ENCODE measurements at regions of chr11 and their contacts with region 1.

Region 1: GRCh38 chr11:122101625-122102291 is 14.3 kb downstream of the BLID start:
- DNase-seq: peak in 1 of 2 donors; percentile 86
- H3K4me3 ChIP-seq: peak overlapping the region; percentile 71 to 77
- H3K27ac ChIP-seq: peak overlapping the region; percentile 91
- H3K4me1 ChIP-seq: peaks cover 3 to 25% of the 10 kb centered on the region in 2 donors
- H3K27me3 ChIP-seq: no peaks in the 10 kb centered on the region
- CTCF ChIP-seq: peak; percentile 60 to 80 (median 72)

Region 2: DNA sequence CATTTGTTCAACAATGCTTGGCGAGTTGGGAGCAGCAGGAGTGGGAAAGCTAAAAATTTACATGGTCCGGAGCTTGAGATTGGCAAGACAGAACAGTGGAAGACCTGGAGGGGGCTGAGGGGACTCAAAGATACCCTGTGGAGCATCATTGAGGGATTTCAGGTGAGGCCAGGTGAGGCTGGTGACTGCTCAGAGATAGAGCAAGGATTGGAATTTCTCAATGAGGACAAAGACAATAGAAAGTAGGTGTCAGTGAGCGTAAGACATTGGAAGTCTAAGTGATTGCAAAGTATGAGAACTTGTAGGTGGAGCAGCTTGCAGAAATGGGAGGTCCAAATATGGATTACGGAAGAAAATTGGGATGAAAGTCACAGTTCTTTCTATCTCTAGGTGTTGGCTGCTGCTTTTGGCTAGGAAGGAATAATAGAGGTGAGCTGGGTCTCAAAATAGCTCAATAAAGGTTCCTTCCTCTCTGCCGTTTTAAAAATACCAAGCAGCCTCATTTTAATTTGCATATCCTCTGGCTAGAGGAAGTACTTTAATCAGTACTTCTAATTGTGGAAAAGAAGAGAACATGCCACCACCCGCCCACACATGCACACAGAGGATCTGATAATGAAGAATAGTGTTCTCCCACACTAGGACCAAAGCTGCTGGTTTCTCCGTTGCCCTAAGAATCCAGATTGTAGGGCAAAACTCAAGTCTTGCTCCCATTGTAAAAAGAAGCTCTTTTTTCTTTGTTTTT is 607.2 kb before region 1 on chr11:
- intact Hi-C with region 1: no loop called
- DNase-seq: no peak
- H3K4me3 ChIP-seq: no peak overlapping the region
- H3K27ac ChIP-seq: no peak overlapping the region
- H3K4me1 ChIP-seq: no peaks in the 10 kb centered on the region
- H3K27me3 ChIP-seq: no peaks in the 10 kb centered on the region
- CTCF ChIP-seq: no peak

Region 3: DNA sequence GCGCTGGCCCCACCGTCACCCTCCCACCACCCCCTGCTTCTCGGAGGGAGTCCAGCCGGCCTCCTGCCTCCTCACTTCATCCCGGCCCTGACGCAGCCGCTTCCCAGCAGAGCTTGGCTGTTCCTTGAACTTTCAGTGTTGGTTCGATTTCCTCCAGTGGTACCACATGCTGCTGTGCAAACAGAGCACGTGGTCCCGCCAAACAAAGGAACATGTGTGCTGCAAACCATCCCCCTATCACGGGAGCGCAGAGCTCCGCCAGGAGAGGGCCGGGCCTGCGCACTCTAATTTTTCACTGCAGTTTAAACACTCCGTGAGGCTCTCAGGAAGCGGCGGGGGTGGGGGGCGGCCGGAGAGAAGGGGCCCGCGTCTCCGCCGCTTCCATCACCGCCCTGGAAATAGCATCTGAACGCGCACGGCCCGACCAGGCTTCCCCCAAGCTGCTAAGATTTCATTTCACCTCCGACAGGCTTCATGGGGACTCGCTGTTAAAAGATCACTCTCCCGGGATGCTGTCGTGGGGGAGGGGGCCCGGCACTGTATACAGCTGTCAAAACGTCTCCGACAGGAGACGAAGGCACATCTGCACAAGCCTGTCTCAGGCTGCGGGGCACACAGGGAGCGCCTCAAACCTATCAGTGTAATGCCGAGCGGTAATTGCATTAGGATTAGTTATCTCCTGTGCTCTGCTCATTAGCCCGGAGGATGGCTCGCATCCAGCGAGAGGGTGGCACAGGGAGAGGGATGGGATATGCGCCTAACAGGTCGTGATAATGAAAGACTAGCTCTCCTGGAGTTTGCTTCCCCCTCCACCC is 379.1 kb before region 1 on chr11:
- intact Hi-C with region 1: loop called (anchors 5 kb)
- DNase-seq: peak; percentile 77 to 89
- H3K4me3 ChIP-seq: peak overlapping the region; percentile 64 to 79
- H3K27ac ChIP-seq: peak overlapping the region; percentile 85 to 93
- H3K4me1 ChIP-seq: no peaks in the 10 kb centered on the region
- H3K27me3 ChIP-seq: no peaks in the 10 kb centered on the region
- CTCF ChIP-seq: peak in 2 of 3 experiments; percentile 9 to 14

Region 4: GRCh38 chr11:121733858-121734257 is 367.9 kb before region 1 on chr11:
- intact Hi-C with region 1: no loop called
- DNase-seq: no peak
- H3K4me3 ChIP-seq: no peak overlapping the region
- H3K27ac ChIP-seq: no peak overlapping the region
- H3K4me1 ChIP-seq: no peaks in the 10 kb centered on the region
- H3K27me3 ChIP-seq: no peaks in the 10 kb centered on the region
- CTCF ChIP-seq: no peak

Region 5: DNA sequence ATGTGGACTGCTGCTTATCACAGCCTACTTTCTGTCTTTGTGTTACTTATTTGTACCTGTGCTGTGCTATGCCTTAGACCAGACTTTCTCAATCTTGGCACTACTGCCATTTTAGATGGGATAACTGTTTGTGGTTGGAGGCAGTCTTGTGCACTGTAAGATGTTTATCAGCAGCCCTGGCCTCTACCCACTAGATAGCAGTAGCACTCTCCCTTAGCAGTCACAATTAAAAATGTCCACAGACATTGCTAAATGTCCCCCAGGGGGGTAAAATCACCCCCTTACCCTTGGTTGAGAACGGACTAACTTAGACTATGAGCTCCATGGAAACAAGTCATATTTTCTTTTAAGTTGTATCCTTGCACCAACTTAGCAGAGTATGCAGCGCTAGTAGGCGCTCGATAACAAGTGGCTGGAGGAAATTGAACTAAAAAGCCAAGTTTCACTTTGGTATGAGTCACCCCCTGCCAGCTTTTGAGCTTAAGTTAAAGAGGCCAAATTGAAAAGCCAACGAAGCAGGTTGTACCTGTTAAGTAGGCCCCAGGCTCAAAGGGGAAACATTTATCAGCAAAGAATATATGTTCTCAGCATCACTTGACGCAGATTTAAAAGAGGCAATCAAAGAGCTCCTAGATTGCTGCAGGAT is 344.2 kb before region 1 on chr11:
- intact Hi-C with region 1: loop called (anchors 5 kb)
- DNase-seq: no peak
- H3K4me3 ChIP-seq: no peak overlapping the region
- H3K27ac ChIP-seq: peak overlapping the region; percentile 60 to 67
- H3K4me1 ChIP-seq: peaks cover 5 to 15% of the 10 kb centered on the region in 2 donors
- H3K27me3 ChIP-seq: no peaks in the 10 kb centered on the region
- CTCF ChIP-seq: peak in 1 of 3 experiments; percentile 5

Region 6: GRCh38 chr11:122045181-122045586 is 56.6 kb before region 1 on chr11:
- intact Hi-C with region 1: loop called (anchors 2 kb)
- DNase-seq: no peak
- H3K4me3 ChIP-seq: no peak overlapping the region
- H3K27ac ChIP-seq: peak overlapping the region; percentile 89 to 98
- H3K4me1 ChIP-seq: peaks cover 0 to 16% of the 10 kb centered on the region in 2 donors
- H3K27me3 ChIP-seq: no peaks in the 10 kb centered on the region
- CTCF ChIP-seq: no peak

Region 7: DNA sequence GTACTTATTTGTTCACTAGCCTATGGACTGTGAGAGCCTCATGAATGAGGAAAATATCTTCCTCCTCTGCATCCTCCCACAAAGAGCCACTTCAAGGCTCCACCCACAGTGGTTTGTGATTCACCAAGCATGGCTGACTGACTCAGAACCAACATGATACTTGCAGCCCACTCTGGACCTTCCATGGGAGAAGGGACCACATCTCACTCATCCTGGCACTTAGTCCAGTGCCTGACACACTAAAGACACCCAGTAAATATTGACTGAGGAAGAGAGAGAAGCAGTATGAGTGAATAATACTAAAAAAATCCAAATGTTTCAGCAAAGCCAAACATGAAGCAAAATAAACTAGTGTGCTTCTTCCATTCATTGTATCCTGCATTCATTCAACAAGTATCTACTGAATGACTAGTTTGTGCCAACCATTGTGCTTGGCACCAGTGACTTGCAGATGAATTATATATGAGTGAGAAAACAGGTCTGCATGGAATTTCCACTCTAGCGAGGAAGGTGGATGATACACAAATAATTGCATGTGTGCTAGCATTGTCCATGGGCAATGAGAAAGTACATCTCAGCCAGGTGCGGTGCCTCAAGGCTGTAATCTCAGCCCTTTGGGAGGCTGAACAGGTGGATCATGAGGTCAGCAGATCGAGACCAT is 69.2 kb after region 1 on chr11:
- intact Hi-C with region 1: no loop called
- DNase-seq: no peak
- H3K4me3 ChIP-seq: no peak overlapping the region
- H3K27ac ChIP-seq: peak overlapping the region; percentile 33 to 56
- H3K4me1 ChIP-seq: peaks cover 2 to 45% of the 10 kb centered on the region in 2 donors
- H3K27me3 ChIP-seq: no peaks in the 10 kb centered on the region
- CTCF ChIP-seq: no peak

Region 8: DNA sequence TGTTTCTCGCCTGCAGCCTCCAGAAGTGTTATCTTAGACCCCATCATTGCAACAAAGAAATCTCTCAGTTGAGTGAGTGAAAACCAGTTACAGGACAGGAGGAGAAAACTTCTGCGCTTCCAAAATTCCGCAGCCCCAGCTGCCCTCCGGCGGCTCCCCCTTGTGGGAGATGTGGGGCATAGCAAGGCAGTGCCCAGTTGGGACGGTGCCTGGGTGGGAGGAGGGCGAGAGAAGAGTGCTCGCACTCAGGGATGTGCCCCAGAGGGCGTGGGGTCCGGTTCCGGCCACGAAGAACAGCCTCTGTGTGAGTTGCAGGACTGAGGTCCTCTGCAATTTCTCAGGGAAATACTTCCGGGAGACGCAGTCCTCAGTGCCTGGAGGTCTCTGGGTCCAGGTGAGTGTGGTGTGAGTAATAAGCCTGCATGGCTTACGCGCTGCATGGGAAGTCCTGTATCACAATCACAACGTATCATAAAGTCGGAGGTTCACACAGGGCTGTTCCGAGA is 101.2 kb after region 1 on chr11:
- intact Hi-C with region 1: loop called (anchors 1 kb)
- DNase-seq: peak in 1 of 2 donors; percentile 87
- H3K4me3 ChIP-seq: peak overlapping the region; percentile 29 to 71
- H3K27ac ChIP-seq: peak overlapping the region; percentile 86 to 90
- H3K4me1 ChIP-seq: peaks cover 0 to 51% of the 10 kb centered on the region in 2 donors
- H3K27me3 ChIP-seq: no peaks in the 10 kb centered on the region
- CTCF ChIP-seq: peak; percentile 95 to 98 (median 97)